IMR-90 (cell line): ENCODE measurements at regions of chr13 and their contacts with region 1.

Region 1: DNA sequence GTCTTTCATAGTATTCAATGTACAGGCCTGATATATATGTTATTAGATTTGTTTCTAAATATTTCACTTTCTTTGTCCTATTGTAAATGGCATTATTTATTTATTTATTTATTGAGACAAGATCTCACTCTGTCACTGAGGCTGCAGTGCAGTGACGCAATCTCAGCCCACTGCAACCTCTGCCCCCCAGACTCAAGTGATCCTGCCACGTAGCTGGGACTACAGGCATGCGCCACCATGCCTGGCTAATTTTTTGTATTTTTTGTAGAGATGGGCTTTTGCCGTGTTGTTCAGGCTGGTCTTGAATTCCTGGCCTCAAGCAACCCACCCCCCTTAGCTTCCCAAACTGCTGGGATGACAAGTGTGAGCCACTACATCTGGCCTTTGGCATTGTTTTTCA is 5.4 kb upstream of the GAS6 start:
- DNase-seq: no peak
- ATAC-seq: no peak
- H3K4me3 ChIP-seq: no peak overlapping the region
- H3K27ac ChIP-seq: no peak overlapping the region
- H3K4me1 ChIP-seq: peaks cover 2% of the 10 kb centered on the region
- H3K27me3 ChIP-seq: no peaks in the 10 kb centered on the region
- CTCF ChIP-seq: no peak
- POLR2A ChIP-seq: no peak
- RAD21 ChIP-seq: no peak

Region 2: DNA sequence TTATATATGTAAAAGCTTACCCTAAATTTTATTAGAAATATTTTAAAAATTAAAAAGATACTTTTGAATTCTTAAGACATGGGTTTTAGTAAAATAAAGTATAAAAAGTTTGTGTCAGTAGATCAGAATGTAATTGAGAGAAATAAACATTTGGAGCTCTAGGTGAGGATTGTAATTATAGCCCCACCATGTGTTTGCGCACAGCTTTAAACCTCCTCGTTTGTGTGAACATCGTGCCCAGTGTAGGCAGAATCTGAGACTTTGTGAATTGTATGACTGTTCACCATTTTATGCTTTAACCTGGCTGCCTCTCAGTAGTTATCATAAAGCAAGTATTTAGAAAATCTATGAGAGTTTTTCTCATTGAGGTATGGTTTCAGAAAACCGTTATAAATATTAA is 630.7 kb before region 1 on chr13:
- CTCF ChIA-PET with region 1: no interaction called
- POLR2A ChIA-PET with region 1: no interaction called
- dilution Hi-C with region 1: no loop called
- in situ Hi-C with region 1: no loop called
- intact Hi-C with region 1: no loop called
- DNase-seq: no peak
- ATAC-seq: peak; percentile 35; the same call in 1 of the 2 replicates
- H3K4me3 ChIP-seq: no peak overlapping the region
- H3K27ac ChIP-seq: no peak overlapping the region
- H3K4me1 ChIP-seq: no peaks in the 10 kb centered on the region
- H3K27me3 ChIP-seq: no peaks in the 10 kb centered on the region
- CTCF ChIP-seq: peak; percentile 28
- POLR2A ChIP-seq: no peak
- RAD21 ChIP-seq: peak; percentile 20; the same call in 1 of the 2 replicates

Region 3: DNA sequence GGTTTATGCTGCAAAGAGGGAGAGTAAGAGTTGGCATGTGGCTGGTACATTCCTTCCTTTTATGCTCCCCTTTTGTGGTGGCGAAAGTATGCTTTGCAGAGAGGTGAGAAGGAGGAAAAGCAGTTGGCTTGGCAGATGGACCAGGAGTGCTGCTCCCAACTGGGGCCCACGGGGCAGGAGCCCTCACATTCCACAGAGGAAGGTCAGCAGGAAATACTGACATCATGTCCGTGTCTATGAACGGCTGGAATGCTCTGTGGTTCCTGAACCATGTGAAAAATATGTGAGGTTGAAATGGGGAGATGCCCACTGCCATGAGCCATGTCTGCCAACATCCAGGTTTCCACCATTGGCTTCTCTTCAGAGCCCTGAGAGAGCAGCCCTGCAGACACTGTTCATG is 27.9 kb after region 1 on chr13:
- CTCF ChIA-PET with region 1: no interaction called
- POLR2A ChIA-PET with region 1: no interaction called
- dilution Hi-C with region 1: no loop called
- in situ Hi-C with region 1: no loop called
- intact Hi-C with region 1: loop called (anchors 2 kb)
- DNase-seq: peak; percentile 98
- ATAC-seq: peak; percentile 91
- H3K4me3 ChIP-seq: no peak overlapping the region
- H3K27ac ChIP-seq: peak overlapping the region; percentile 94
- H3K4me1 ChIP-seq: peaks cover 26% of the 10 kb centered on the region
- H3K27me3 ChIP-seq: no peaks in the 10 kb centered on the region
- CTCF ChIP-seq: no peak
- POLR2A ChIP-seq: peak; percentile 54; the same call in 1 of the 2 replicates
- RAD21 ChIP-seq: peak; percentile 1; the same call in 1 of the 2 replicates